ENCODE measurements at regions of chr7 and their contacts with region 1.

Region 1: DNA sequence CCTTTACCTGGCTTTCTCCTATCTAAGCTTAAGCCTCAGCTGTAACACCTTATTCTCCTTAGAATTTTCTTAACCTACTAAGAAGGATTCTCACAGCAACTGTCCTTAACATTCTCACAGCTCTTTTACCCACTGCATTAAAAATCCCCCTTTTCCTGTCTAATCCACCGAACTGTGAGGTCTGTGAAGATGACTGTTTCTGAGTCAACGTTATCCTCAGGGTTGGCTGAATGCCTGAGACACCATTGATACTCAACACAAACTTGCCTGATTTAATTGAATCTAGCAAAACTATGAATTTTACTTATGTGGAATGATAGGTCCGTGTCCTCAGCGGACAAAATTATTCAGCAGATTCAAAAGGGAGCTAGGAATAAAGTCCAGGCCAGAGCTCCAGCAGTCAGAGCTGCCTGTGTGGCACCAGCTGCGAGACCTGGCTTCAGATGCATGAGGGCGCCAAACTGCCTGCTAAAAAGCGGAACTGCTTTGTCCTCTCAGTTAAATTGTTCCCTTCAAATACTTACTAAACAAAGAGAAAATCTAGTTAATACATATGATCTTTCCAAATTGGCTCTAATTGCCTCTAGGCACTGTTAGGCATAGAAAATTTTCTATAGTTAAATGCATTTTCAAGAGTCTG is 33.4 kb upstream of the VWDE start:
- DNase-seq: no peak
- H3K4me3 ChIP-seq: no peak overlapping the region
- H3K27ac ChIP-seq: no peak overlapping the region
- H3K4me1 ChIP-seq: peaks cover 0 to 3% (median 0%) of the 10 kb centered on the region in 4 experiments; a peak in 2 of 7 replicates
- H3K27me3 ChIP-seq: no peaks in the 10 kb centered on the region
- CTCF ChIP-seq: peak; percentile 55 to 71 (median 60)
- EP300 ChIP-seq: no peak
- POLR2A ChIP-seq: no peak
- RAD21 ChIP-seq: peak; percentile 59 to 70

Region 2: GRCh38 chr7:12389089-12389700 is 47.8 kb before region 1 on chr7:
- CTCF ChIA-PET with region 1: interaction called, 11 read pairs
- POLR2A ChIA-PET with region 1: no interaction called
- DNase-seq: peak in 1 of 2 experiments; percentile 5
- H3K4me3 ChIP-seq: no peak overlapping the region
- H3K27ac ChIP-seq: no peak overlapping the region
- H3K4me1 ChIP-seq: peaks cover 0 to 3% (median 1%) of the 10 kb centered on the region in 4 experiments; a peak in 3 of 7 replicates
- H3K27me3 ChIP-seq: peaks cover 0 to 1% (median 0%) of the 10 kb centered on the region in 4 experiments; a peak in 1 of 7 replicates
- CTCF ChIP-seq: peak; percentile 47 to 97 (median 83)
- EP300 ChIP-seq: no peak
- POLR2A ChIP-seq: no peak
- RAD21 ChIP-seq: peak; percentile 73 to 86

Region 3: DNA sequence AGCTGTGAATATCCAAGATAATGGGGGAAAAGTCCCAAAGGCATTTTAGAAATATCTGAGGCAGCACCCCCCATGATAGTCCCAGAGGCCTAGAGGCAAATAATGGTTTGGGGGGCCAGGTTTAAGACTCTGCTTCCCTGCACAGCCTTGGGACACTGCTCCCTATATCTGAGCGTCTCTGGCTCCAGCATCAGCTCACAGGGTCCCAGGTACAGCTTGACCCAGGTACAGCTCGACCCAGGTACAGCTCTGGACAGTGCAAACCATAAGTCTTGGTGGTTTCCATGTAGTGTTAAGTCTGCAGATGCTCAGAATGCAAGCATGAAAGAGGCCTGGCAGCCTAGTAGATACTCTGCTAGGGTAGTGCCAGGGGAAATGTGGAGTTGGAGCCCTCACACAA is 13.6 kb after region 1 on chr7:
- CTCF ChIA-PET with region 1: interaction called, 98 read pairs
- POLR2A ChIA-PET with region 1: interaction called, 3 read pairs
- DNase-seq: no peak
- H3K4me3 ChIP-seq: no peak overlapping the region
- H3K27ac ChIP-seq: no peak overlapping the region
- H3K4me1 ChIP-seq: peaks cover 0 to 5% (median 3%) of the 10 kb centered on the region in 4 experiments; a peak in 3 of 7 replicates
- H3K27me3 ChIP-seq: no peaks in the 10 kb centered on the region
- CTCF ChIP-seq: no peak
- EP300 ChIP-seq: no peak
- POLR2A ChIP-seq: no peak
- RAD21 ChIP-seq: no peak

Region 4: GRCh38 chr7:12540850-12541249 is 103.8 kb after region 1 on chr7:
- CTCF ChIA-PET with region 1: no interaction called
- POLR2A ChIA-PET with region 1: no interaction called
- DNase-seq: no peak
- H3K4me3 ChIP-seq: no peak overlapping the region
- H3K27ac ChIP-seq: no peak overlapping the region
- H3K4me1 ChIP-seq: no peaks in the 10 kb centered on the region
- H3K27me3 ChIP-seq: no peaks in the 10 kb centered on the region
- CTCF ChIP-seq: no peak
- EP300 ChIP-seq: no peak
- POLR2A ChIP-seq: no peak
- RAD21 ChIP-seq: no peak

Measured in H1 (cell line).